ENCODE measurements at regions of chr19 and their contacts with region 1.

Region 1: DNA sequence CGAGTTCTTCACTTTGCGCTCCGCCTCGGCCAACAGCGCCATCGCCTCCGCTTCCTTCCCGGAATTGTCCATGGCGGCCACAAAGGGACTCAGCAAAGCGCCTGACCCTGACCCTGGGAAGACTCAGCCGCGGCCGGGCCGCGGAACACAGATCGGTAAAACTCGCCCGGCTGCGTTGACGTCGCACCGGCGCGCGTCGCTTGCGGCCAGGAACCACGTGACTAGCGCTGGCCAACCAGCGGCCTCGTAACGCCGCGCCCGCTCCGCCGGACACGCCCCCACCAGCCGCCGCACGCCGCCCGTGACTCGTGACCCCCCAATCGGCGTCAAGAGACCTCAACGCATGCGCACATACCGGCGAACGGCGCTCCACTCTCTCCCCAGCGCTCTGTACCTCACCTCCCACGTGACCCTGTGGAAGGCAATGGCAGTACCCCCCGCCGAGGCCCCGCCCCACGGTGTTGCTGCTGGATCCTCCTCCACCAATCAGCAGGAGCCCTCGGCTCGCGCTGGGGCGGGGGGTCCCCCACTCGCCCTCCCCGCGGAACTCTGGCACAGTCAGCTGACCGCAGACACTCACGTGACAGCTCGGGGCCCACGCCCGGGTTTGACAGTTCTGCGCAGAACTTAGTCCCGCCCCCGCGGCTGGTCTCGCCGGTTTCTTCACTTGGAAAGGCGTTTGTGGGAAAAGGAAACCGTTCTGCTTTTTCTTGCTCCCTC is at the start of gene NAPA:
- DNase-seq: peak; percentile 100
- H3K4me3 ChIP-seq: peak within 1 kb of the TSS; percentile 73 to 93
- H3K27ac ChIP-seq: peak within 1 kb of the TSS; percentile 86 to 97
- H3K4me1 ChIP-seq: peaks cover 14 to 48% (median 40%) of the 10 kb centered on the region in 4 donors
- H3K27me3 ChIP-seq: no peaks in the 10 kb centered on the region
- CTCF ChIP-seq: no peak

Region 2: DNA sequence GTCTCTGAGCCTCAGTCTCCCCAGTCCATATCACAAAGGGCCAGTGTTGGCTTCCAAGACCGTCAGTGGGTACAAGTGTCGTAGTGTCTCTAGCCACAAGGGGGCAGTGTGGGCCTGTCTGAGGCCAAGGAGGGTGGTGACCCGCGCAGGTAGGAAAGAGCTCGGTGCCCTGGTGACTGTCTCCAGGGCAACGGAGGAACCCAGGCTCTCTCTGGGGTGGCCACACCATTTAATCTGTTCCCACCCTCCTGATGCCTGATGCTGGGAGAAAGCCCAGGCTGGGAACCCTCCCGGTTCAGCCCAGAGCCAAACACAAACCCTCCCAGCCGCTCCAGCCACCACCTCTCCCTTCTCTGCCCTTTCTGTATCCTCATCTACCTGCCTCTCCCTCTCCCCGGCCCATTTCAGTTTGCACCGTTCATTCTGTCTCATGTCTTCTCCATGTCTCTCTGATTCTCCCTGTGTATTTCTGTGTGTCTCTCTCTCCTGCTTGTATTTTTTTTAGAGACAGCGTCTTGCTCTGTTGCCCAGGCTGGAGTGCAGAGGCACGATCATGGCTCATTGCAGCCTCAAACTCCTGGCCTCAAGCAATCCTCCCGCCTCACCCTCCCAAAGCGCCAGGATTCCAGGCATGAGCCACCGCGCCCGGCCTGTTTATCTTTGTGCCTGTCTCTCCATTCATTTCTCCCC is 78.2 kb before region 1 on chr19:
- intact Hi-C with region 1: loop called (anchors 2 kb)
- DNase-seq: peak; percentile 63 to 78
- H3K4me3 ChIP-seq: no peak overlapping the region
- H3K27ac ChIP-seq: no peak overlapping the region
- H3K4me1 ChIP-seq: peaks cover 0 to 12% (median 0%) of the 10 kb centered on the region in 4 donors
- H3K27me3 ChIP-seq: peaks cover 0 to 49% of the 10 kb centered on the region in 2 donors
- CTCF ChIP-seq: peak; percentile 77 to 87

Region 3: GRCh38 chr19:47471733-47472457 is 43.1 kb before region 1 on chr19 and contains the start of gene SLC8A2:
- intact Hi-C with region 1: loop called (anchors 5 kb)
- DNase-seq: peak; percentile 47 to 88
- H3K4me3 ChIP-seq: peak within 1 kb of the TSS; percentile 18 to 35
- H3K27ac ChIP-seq: no peak within 1 kb of the TSS
- H3K4me1 ChIP-seq: peaks cover 0 to 40% (median 22%) of the 10 kb centered on the region in 4 donors
- H3K27me3 ChIP-seq: peaks cover 0 to 28% of the 10 kb centered on the region in 2 donors
- CTCF ChIP-seq: no peak

Region 4: GRCh38 chr19:47600246-47601179 is 85.5 kb after region 1 on chr19:
- intact Hi-C with region 1: loop called (anchors 5 kb)
- DNase-seq: peak; percentile 100
- H3K4me3 ChIP-seq: peak overlapping the region; percentile 56 to 79
- H3K27ac ChIP-seq: peak overlapping the region; percentile 82 to 88
- H3K4me1 ChIP-seq: peaks cover 6 to 22% (median 13%) of the 10 kb centered on the region in 4 donors
- H3K27me3 ChIP-seq: no peaks in the 10 kb centered on the region
- CTCF ChIP-seq: no peak

Region 5: DNA sequence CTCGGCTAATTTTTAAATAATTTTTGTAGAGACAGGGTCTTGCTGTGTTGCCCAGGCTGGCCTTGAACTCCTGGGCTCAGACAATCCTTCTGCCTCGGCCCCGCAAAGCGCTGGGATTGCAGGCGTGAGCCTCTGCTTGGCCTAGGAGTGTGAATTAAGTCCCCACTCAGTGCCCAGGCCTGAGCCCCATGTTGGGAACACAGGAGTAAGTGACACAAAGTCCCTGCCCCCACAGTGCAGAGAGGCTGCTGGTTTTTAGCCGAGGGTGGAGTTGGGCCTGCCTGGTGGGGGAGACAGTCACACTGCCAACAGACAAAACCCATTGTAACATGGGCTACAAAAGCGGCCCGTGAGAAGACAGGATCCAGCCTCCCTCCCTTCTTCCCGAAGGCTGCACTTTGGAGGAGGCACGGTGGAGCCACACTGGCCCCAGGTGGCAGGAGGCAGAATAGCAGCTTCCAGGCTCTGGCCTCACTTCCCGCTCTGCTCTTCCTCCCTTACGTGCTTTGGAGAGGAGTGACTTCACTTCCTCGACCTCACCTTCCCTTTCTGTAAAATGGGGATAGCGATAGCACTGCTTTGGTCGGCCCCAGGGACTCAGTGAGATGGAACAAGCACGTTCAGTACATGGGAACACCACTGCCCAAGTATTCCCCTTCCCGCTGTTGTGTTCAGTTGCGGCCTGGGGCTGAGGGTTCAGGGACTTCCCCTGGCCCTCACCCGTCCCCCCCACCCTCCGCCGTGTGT is 183.0 kb after region 1 on chr19:
- intact Hi-C with region 1: loop called (anchors 10 kb)
- DNase-seq: peak; percentile 70 to 84
- H3K4me3 ChIP-seq: no peak overlapping the region
- H3K27ac ChIP-seq: peak overlapping the region; percentile 6 to 54
- H3K4me1 ChIP-seq: peaks cover 0 to 4% (median 2%) of the 10 kb centered on the region in 4 donors
- H3K27me3 ChIP-seq: no peaks in the 10 kb centered on the region
- CTCF ChIP-seq: peak; percentile 98 to 99

Measured in tibial artery (tissue), 4 donors.